Activated CD8-positive, alpha-beta T cell treated with anti-CD3 and anti-CD28 coated beads for 36 hours (primary cell): ENCODE measurements at regions of chr1 and their contacts with region 1.

Region 1: GRCh38 chr1:30718636-30719405 is 4.6 kb downstream of the MATN1 start:
- DNase-seq: peak; percentile 100
- ATAC-seq: peak; percentile 70
- H3K4me3 Mint-ChIP-seq: peak overlapping the region; percentile 88
- H3K27ac Mint-ChIP-seq: peak overlapping the region; percentile 93
- H3K4me1 Mint-ChIP-seq: peaks cover 29% of the 10 kb centered on the region
- H3K27me3 Mint-ChIP-seq: no peaks in the 10 kb centered on the region
- CTCF ChIP-seq: no peak

Region 2: DNA sequence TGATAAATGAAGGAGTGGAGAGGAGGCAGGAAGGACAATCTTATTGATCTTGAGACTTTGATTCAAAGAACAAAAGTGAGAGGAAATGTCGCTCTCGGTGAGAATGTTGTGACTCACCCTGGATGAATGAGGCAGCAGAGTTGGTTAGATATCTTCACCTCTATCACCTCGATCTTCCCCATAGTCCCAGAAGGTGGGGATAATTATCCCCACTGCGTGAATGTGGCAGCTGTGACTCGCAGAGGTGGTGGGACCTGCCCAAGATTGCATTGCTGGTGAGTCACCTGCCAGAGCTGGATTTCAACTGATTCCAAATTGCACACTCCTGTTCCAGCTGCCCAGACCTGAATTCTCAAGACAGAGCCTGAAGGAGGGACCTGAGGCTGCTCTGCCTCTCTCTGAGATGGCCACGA is 100.5 kb before region 1 on chr1:
- CTCF ChIA-PET with region 1: no interaction called
- POLR2A ChIA-PET with region 1: no interaction called
- intact Hi-C with region 1: no loop called
- DNase-seq: no peak
- ATAC-seq: no peak
- H3K4me3 Mint-ChIP-seq: no peak overlapping the region
- H3K27ac Mint-ChIP-seq: no peak overlapping the region
- H3K4me1 Mint-ChIP-seq: peaks cover 2% of the 10 kb centered on the region
- H3K27me3 Mint-ChIP-seq: peaks cover 15% of the 10 kb centered on the region
- CTCF ChIP-seq: no peak

Region 3: GRCh38 chr1:30743584-30744059 is 24.8 kb after region 1 on chr1:
- CTCF ChIA-PET with region 1: interaction called, 80 read pairs
- POLR2A ChIA-PET with region 1: interaction called, 671 read pairs
- intact Hi-C with region 1: no loop called
- DNase-seq: peak; percentile 85
- ATAC-seq: peak; percentile 71
- H3K4me3 Mint-ChIP-seq: peak overlapping the region; percentile 55
- H3K27ac Mint-ChIP-seq: peak overlapping the region; percentile 98
- H3K4me1 Mint-ChIP-seq: peaks cover 96% of the 10 kb centered on the region
- H3K27me3 Mint-ChIP-seq: no peaks in the 10 kb centered on the region
- CTCF ChIP-seq: no peak

Region 4: GRCh38 chr1:30756545-30757195 is 37.8 kb after region 1 on chr1:
- CTCF ChIA-PET with region 1: interaction called, 27 read pairs
- POLR2A ChIA-PET with region 1: interaction called, 671 read pairs
- intact Hi-C with region 1: no loop called
- DNase-seq: peak; percentile 88
- ATAC-seq: peak; percentile 57
- H3K4me3 Mint-ChIP-seq: peak overlapping the region; percentile 87
- H3K27ac Mint-ChIP-seq: peak overlapping the region; percentile 98
- H3K4me1 Mint-ChIP-seq: peaks cover 75% of the 10 kb centered on the region
- H3K27me3 Mint-ChIP-seq: no peaks in the 10 kb centered on the region
- CTCF ChIP-seq: no peak

Region 5: DNA sequence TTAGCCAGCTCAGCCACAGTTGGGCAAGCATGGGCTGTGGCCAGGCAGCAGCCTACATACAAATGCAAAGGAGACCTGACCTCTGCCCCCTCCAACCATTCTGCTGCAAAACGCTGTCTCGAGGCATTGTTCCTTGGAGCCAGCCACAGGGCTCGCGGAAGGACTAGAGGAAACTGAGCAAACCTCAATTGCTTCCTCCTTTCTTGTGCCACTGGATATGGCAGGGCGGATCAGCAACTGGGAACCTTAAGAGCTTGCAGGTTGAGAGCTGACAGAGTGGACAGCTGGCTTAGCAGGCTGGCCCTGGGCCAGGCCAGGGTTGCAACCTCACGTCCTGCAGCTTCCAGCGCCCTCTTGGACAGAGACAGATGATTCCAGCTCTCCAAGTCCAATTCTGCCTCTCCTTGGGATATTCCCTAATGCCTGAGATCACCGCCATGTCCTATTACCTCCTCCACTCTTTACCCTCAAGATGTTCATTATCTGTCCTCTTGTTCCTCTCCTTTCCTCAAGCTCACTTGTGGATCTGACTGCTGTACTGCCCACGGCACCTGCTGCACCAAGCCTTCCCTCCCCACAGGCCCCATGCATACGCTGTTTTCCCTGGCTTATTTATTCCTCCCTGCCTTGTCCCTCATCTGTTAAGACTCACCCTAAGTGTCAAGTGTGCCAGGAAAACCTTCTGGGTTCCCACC is 122.2 kb after region 1 on chr1:
- CTCF ChIA-PET with region 1: no interaction called
- POLR2A ChIA-PET with region 1: no interaction called
- intact Hi-C with region 1: no loop called
- DNase-seq: no peak
- ATAC-seq: no peak
- H3K4me3 Mint-ChIP-seq: no peak overlapping the region
- H3K27ac Mint-ChIP-seq: no peak overlapping the region
- H3K4me1 Mint-ChIP-seq: no peaks in the 10 kb centered on the region
- H3K27me3 Mint-ChIP-seq: peaks cover 42% of the 10 kb centered on the region
- CTCF ChIP-seq: no peak

Region 6: GRCh38 chr1:30911046-30911954 is 192.5 kb after region 1 on chr1:
- CTCF ChIA-PET with region 1: interaction called, 44 read pairs
- POLR2A ChIA-PET with region 1: no interaction called
- intact Hi-C with region 1: loop called (anchors 5 kb)
- DNase-seq: peak; percentile 80
- ATAC-seq: peak; percentile 64
- H3K4me3 Mint-ChIP-seq: no peak overlapping the region
- H3K27ac Mint-ChIP-seq: no peak overlapping the region
- H3K4me1 Mint-ChIP-seq: peaks cover 9% of the 10 kb centered on the region
- H3K27me3 Mint-ChIP-seq: peaks cover 32% of the 10 kb centered on the region
- CTCF ChIP-seq: peak; percentile 74